ENCODE measurements at regions of chr9 and their contacts with region 1.

Region 1: GRCh38 chr9:37485389-37486219 is at the start of gene POLR1E:
- DNase-seq: peak; percentile 92 to 99 (median 97)
- ATAC-seq: peak; percentile 100
- H3K4me3 ChIP-seq: peak within 1 kb of the TSS; percentile 82
- H3K4me3 Mint-ChIP-seq: peak within 1 kb of the TSS; percentile 88 to 98 (median 96)
- H3K27ac ChIP-seq: peak within 1 kb of the TSS; percentile 85
- H3K27ac Mint-ChIP-seq: peak within 1 kb of the TSS; percentile 88 to 97 (median 94)
- H3K4me1 ChIP-seq: peaks cover 20% of the 10 kb centered on the region in 2 donors
- H3K4me1 Mint-ChIP-seq: peaks cover 22 to 45% (median 39%) of the 10 kb centered on the region in 7 donors
- H3K27me3 ChIP-seq: no peaks in the 10 kb centered on the region
- H3K27me3 Mint-ChIP-seq: peaks cover 8 to 9% (median 8%) of the 10 kb centered on the region in 5 donors
- total RNA-seq, gene POLR1E: 24.7 to 40.0 (median 31.0) TPM

Region 2: GRCh38 chr9:37027582-37028419 is 457.8 kb before region 1 on chr9:
- CTCF ChIA-PET with region 1: no interaction called
- POLR2A ChIA-PET with region 1: no interaction called
- intact Hi-C with region 1: loop called in 1 of 2 experiments (anchors 1 kb)
- DNase-seq: peak; percentile 67 to 87 (median 77)
- ATAC-seq: peak; percentile 96
- H3K4me3 ChIP-seq: peak overlapping the region; percentile 29
- H3K4me3 Mint-ChIP-seq: peak overlapping the region; percentile 38 to 77 (median 62)
- H3K27ac ChIP-seq: no peak overlapping the region
- H3K27ac Mint-ChIP-seq: peak overlapping the region in 1 of 9 donors; percentile 42
- H3K4me1 ChIP-seq: peaks cover 25 to 56% of the 10 kb centered on the region in 2 donors
- H3K4me1 Mint-ChIP-seq: peaks cover 18 to 50% (median 37%) of the 10 kb centered on the region in 7 donors
- H3K27me3 ChIP-seq: peaks cover 34 to 56% of the 10 kb centered on the region in 2 donors
- H3K27me3 Mint-ChIP-seq: peaks cover 73 to 95% (median 81%) of the 10 kb centered on the region in 5 donors

Region 3: GRCh38 chr9:37422289-37423104 is 63.1 kb before region 1 on chr9 and contains the start of gene GRHPR:
- CTCF ChIA-PET with region 1: no interaction called
- POLR2A ChIA-PET with region 1: interaction called, 15 read pairs
- intact Hi-C with region 1: loop called (anchors 1 kb)
- DNase-seq: peak; percentile 76 to 93 (median 84)
- ATAC-seq: peak; percentile 99
- H3K4me3 ChIP-seq: peak within 1 kb of the TSS; percentile 86
- H3K4me3 Mint-ChIP-seq: peak within 1 kb of the TSS; percentile 84 to 98 (median 96)
- H3K27ac ChIP-seq: peak within 1 kb of the TSS; percentile 89
- H3K27ac Mint-ChIP-seq: peak within 1 kb of the TSS; percentile 87 to 98 (median 95)
- H3K4me1 ChIP-seq: peaks cover 5 to 12% of the 10 kb centered on the region in 2 donors
- H3K4me1 Mint-ChIP-seq: peaks cover 19 to 31% (median 23%) of the 10 kb centered on the region in 7 donors
- H3K27me3 ChIP-seq: no peaks in the 10 kb centered on the region
- H3K27me3 Mint-ChIP-seq: no peaks in the 10 kb centered on the region
- total RNA-seq, gene GRHPR: 33.2 to 58.6 (median 53.1) TPM

Region 4: GRCh38 chr9:37501957-37502596 is 16.5 kb after region 1 on chr9:
- CTCF ChIA-PET with region 1: interaction called, 3 read pairs
- POLR2A ChIA-PET with region 1: no interaction called
- intact Hi-C with region 1: loop called in 1 of 2 experiments (anchors 1 kb)
- DNase-seq: no peak
- ATAC-seq: no peak
- H3K4me3 ChIP-seq: no peak overlapping the region
- H3K4me3 Mint-ChIP-seq: no peak overlapping the region
- H3K27ac ChIP-seq: no peak overlapping the region
- H3K27ac Mint-ChIP-seq: peak overlapping the region in 3 of 9 donors; percentile 4 to 49 (median 34)
- H3K4me1 ChIP-seq: peaks cover 0 to 6% of the 10 kb centered on the region in 2 donors
- H3K4me1 Mint-ChIP-seq: peaks cover 0 to 12% (median 4%) of the 10 kb centered on the region in 7 donors
- H3K27me3 ChIP-seq: no peaks in the 10 kb centered on the region
- H3K27me3 Mint-ChIP-seq: no peaks in the 10 kb centered on the region

Region 5: DNA sequence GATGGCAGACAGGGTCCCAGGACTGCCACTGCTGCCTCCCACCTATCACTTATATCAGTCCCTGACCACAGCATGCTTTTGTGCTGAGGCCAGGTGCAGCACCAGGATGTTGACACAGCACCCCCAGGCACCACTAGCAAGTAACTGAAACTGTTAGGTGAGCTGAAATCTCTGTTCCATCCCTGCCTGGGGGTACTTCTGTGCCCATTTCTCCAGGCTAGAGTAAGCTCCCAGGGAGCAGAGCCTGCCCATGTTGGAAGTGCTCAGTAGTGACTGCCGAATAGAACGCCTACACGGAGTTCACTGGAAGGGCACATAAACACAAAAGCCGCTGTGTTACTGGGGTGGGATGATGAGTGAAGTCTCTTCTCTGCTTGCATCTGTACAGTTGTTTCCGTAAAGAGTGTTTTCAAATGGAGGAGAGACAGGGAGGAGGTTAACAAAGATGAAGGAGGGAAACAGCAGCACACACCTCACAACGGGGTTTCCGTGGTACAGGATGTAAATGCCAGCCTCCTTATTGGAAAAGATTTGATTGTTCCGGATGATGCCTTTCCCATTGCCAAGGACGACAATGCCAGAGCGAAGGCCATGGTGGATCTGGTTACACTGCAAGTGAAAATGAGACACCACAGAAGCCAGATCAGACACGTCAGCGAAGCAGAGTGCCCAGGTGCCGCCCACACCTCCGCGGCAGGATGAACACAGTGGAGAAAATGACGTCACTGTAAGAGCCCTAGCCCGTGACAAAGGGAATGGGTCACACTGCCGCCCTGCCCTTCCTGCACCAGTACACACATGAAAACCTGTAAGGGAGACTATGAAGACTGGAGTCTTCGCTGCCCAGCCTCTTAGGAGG is 43.3 kb after region 1 on chr9:
- CTCF ChIA-PET with region 1: no interaction called
- POLR2A ChIA-PET with region 1: no interaction called
- intact Hi-C with region 1: no loop called
- DNase-seq: peak in 8 of 9 donors; percentile 6 to 36 (median 22)
- ATAC-seq: peak; percentile 76
- H3K4me3 ChIP-seq: peak overlapping the region; percentile 20
- H3K4me3 Mint-ChIP-seq: peak overlapping the region in 9 of 10 donors; percentile 18 to 62 (median 48)
- H3K27ac ChIP-seq: no peak overlapping the region
- H3K27ac Mint-ChIP-seq: peak overlapping the region in 8 of 9 donors; percentile 15 to 76 (median 50)
- H3K4me1 ChIP-seq: peaks cover 0 to 20% of the 10 kb centered on the region in 2 donors
- H3K4me1 Mint-ChIP-seq: peaks cover 0 to 7% (median 0%) of the 10 kb centered on the region in 7 donors
- H3K27me3 ChIP-seq: no peaks in the 10 kb centered on the region
- H3K27me3 Mint-ChIP-seq: no peaks in the 10 kb centered on the region

Region 6: DNA sequence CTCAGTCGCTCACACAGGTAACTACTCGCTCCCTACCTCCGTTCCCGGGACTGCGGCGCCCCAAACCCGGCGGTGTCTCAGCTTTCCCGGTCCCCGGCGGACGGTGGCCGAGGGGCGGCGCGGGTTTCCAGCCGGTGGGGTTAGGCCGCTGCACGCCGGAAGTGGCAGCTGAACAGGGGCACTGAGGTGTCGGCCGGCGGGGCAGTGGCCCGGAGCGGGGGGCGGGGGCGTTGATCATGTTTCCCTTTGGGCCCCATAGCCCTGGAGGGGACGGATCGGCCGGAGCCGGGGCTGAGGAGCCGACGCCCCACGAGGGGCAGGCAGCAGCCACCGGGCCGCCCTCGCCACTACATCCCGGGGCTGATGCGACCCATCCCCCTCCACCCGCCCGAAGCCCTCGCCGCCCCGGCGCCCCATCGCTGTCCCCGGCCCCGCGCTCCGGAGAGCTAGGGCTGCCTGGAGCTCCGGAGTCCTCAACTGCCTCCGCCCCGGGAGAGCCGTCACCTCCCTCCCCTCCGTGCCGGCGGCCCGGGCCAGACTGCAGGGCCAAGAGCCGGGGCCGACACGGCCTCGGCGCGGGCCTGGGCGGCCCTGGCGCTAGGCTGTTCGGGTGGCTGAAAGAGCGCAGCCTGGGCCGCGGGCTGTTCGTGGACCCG is 315.2 kb after region 1 on chr9 and contains the start of gene DCAF10:
- CTCF ChIA-PET with region 1: no interaction called
- POLR2A ChIA-PET with region 1: no interaction called
- intact Hi-C with region 1: loop called in 1 of 2 experiments (anchors 1 kb)
- DNase-seq: peak; percentile 80 to 97 (median 87)
- ATAC-seq: peak; percentile 95
- H3K4me3 ChIP-seq: peak within 1 kb of the TSS; percentile 97
- H3K4me3 Mint-ChIP-seq: peak within 1 kb of the TSS; percentile 86 to 95 (median 93)
- H3K27ac ChIP-seq: peak within 1 kb of the TSS; percentile 69
- H3K27ac Mint-ChIP-seq: peak within 1 kb of the TSS; percentile 71 to 95 (median 90)
- H3K4me1 ChIP-seq: peaks cover 19 to 26% of the 10 kb centered on the region in 2 donors
- H3K4me1 Mint-ChIP-seq: peaks cover 24 to 55% (median 42%) of the 10 kb centered on the region in 7 donors
- H3K27me3 ChIP-seq: no peaks in the 10 kb centered on the region
- H3K27me3 Mint-ChIP-seq: no peaks in the 10 kb centered on the region
- total RNA-seq, gene DCAF10: 12.1 to 22.5 (median 21.3) TPM

Region 7: GRCh38 chr9:38074441-38074961 is 588.9 kb after region 1 on chr9:
- CTCF ChIA-PET with region 1: no interaction called
- POLR2A ChIA-PET with region 1: no interaction called
- intact Hi-C with region 1: loop called in 1 of 2 experiments (anchors 5 kb)
- DNase-seq: no peak
- ATAC-seq: no peak
- H3K4me3 ChIP-seq: no peak overlapping the region
- H3K4me3 Mint-ChIP-seq: no peak overlapping the region
- H3K27ac ChIP-seq: no peak overlapping the region
- H3K27ac Mint-ChIP-seq: no peak overlapping the region
- H3K4me1 ChIP-seq: peaks cover 0 to 8% of the 10 kb centered on the region in 2 donors
- H3K4me1 Mint-ChIP-seq: peaks cover 7 to 26% (median 17%) of the 10 kb centered on the region in 7 donors
- H3K27me3 ChIP-seq: no peaks in the 10 kb centered on the region
- H3K27me3 Mint-ChIP-seq: peaks cover 18 to 33% (median 20%) of the 10 kb centered on the region in 5 donors

Measured in naive thymus-derived CD4-positive, alpha-beta T cell (primary cell).